GM10248 (cell line): ENCODE measurements at regions of chr2 and their contacts with region 1.

Region 1: DNA sequence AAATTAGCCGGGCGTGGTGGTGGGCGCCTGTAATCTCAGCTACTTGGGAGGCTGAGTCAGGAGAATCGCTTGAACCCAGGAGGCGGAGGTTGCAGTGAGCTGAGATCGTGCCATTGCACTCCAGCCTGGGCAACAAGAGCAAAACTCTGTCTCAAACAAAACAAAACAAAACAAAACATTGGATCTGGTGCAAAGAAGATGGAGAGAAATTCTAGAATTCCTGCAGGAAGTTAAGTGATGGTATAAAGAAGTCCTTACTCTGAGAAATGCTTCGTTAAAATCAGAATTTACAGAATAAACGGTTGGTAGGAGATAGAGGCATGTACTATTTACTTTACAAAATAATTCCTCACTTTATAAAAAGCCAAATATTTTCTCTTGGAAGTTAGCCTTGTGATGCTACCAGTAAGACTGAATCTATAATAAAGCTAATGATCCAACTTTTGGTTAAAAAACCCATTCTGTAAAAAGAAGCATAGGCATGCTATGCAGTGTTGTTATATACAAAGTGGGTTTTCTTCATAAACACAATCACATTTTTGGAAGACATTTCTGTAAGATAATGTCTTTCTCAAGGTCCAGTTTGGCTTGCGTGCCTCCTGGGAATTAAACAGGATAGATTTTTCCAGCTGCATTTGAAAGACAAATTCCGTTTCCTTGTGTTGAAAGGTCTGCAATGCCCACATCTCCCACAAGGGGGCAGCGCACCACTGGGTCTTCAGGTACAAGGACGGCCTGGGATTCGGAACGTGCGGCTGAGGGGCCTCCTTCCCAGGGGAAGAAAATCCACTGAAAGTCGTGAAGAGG is 35.6 kb upstream of the PNO1 start:
- DNase-seq: peak; percentile 58
- CTCF ChIP-seq: peak; percentile 96

Region 2: GRCh38 chr2:68134554-68134953 is 12.5 kb after region 1 on chr2:
- CTCF ChIA-PET with region 1: interaction called, 31 read pairs
- POLR2A ChIA-PET with region 1: no interaction called
- DNase-seq: no peak
- CTCF ChIP-seq: no peak

Region 3: DNA sequence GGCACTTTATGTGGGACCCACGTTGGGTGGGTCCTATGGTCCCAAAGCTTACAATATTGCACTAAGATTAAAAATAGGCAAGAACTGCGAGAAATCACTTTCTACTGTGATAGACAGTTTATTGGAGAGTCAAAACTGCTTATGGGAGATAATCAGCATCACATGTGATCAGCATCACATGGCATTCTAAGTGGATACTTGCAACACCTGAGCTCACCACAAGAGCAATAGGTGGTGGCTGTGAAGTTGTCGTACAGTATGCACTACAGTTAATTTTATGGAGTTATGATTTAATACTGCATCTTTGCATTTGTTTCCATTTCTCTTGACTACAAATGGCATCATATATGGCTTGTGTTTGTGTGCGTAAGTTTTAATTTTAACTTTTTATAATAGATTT is 47.2 kb after region 1 on chr2:
- CTCF ChIA-PET with region 1: interaction called, 15 read pairs
- POLR2A ChIA-PET with region 1: no interaction called
- DNase-seq: no peak
- CTCF ChIP-seq: no peak

Region 4: DNA sequence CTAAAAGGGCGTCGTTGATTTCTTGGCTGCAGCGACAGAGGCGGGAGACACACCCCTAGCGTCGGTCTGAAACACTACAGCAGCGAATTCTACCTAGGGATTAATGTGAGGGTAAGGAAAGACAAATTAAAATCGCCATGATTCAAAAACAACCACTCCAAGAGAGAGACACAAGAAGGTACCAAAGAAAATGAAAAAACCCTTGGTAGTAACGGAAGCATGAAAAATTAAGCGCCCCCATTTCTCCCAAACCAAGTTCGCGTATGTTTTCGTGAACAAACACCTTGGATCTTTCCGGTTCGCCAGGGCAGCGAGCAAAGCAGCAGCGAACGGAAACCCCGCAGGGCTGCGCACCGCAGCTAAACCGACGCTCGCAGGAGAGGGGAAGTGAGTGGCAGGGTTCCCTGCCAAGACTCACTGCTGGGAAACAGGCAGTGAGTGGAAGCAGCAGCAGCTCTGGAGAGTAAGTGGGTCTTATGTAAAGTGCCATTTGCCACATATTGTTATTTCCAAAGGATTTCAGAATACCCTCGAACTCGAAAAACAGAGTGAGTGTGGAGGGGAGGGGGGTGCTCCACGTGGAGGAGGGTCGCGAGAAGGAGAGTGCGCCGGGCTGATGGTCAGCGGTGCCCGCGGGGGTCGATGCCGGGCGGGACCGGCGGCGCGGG is 129.2 kb after region 1 on chr2:
- CTCF ChIA-PET with region 1: interaction called, 11 read pairs
- POLR2A ChIA-PET with region 1: no interaction called
- DNase-seq: peak; percentile 72
- CTCF ChIP-seq: peak; percentile 73

Region 5: DNA sequence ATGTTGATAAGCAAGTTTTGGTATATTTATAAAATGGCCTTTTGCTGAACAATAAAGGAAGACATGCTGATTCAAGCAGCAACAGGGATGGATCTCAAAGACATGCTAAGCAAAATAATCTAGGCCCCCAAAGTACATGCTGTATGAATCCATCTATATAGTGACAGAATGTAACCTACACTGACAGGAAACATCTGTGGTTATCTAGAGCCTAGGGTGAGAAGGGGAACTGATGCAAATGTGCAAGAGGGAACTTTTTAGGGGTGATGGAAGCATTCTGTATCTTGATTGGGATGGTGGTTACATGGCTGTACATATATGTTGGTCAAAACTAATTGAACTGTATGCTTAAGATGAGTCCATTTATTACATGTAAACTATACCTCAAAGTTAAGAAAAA is 173.4 kb after region 1 on chr2:
- CTCF ChIA-PET with region 1: interaction called, 11 read pairs
- POLR2A ChIA-PET with region 1: no interaction called
- DNase-seq: no peak
- CTCF ChIP-seq: no peak